GM12878 (cell line): ENCODE measurements at regions of chr10 and their contacts with region 1.

Region 1: DNA sequence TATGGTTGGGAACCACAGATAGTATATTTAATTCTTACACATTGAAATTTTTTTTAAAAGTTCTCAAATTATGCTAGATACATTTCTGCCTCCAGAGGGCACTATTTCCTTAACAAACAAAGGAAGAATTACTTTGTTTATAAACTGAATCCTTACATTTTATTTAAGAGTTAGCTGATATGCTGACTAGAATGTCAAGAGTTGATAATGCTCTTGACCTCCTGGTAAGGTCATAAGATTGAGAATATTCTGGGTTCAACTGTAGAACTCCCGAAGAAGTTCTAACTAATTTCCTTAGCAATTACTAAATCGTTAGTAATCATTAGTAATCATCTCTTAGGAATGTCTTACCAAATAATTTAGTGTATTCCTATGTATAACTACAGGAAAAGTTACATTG is 95.3 kb upstream of the CYP26C1 start:
- DNase-seq: no peak
- ATAC-seq: 0 out of 3 replicates have a peak, but pooled peaks have one; percentile 33
- H3K4me3 ChIP-seq: no peak overlapping the region
- H3K27ac ChIP-seq: no peak overlapping the region
- H3K4me1 ChIP-seq: no peaks in the 10 kb centered on the region
- H3K27me3 ChIP-seq: no peaks in the 10 kb centered on the region
- CTCF ChIP-seq: peak; percentile 32 to 59 (median 38); a peak in 5 of 6 replicates
- EP300 ChIP-seq: no peak
- POLR2A ChIP-seq: no peak
- RAD21 ChIP-seq: peak; percentile 36; the same call in 1 of the 2 replicates

Region 2: GRCh38 chr10:92886334-92886961 is 78.9 kb before region 1 on chr10:
- CTCF ChIA-PET with region 1: interaction called, 26 read pairs
- POLR2A ChIA-PET with region 1: no interaction called
- RAD21 ChIA-PET with region 1: interaction called, 4 read pairs
- SMC1A ChIA-PET with region 1: interaction called, 5 read pairs
- in situ Hi-C with region 1: no loop called
- intact Hi-C with region 1: loop called (anchors 1 kb)
- DNase-seq: no peak
- ATAC-seq: peak; percentile 68
- H3K4me3 ChIP-seq: no peak overlapping the region
- H3K27ac ChIP-seq: no peak overlapping the region
- H3K4me1 ChIP-seq: no peaks in the 10 kb centered on the region
- H3K27me3 ChIP-seq: no peaks in the 10 kb centered on the region
- CTCF ChIP-seq: no peak
- EP300 ChIP-seq: no peak
- POLR2A ChIP-seq: no peak
- RAD21 ChIP-seq: no peak

Region 3: DNA sequence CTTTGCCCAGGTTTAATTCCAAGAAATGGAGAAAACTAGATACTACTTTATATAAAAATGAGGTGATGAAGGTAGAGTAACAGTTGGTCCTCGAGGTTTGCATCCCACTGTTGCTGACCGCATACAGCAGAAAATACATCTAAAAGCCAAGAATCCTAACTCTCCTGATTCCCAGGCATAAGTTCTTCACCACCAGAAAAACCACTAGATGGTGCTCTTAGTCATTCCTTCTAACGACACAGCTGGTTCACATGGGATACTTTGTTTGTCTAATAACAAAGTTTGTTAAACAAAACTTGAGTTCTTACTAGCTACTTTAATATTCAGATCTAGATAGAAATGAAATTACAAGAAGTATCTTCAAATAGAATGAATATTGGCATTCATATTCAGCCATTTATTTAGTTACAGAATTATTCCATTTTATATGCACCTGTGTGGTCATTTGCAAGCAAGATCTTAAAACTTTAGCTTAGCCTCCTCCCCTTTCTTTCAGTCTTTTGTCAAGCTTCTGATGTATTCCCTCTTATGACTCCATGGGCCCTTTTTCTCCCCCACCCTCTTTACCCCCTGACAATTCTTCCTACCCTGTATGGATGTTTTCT is 41.2 kb after region 1 on chr10:
- CTCF ChIA-PET with region 1: interaction called, 10 read pairs
- POLR2A ChIA-PET with region 1: no interaction called
- RAD21 ChIA-PET with region 1: interaction called, 3 read pairs
- SMC1A ChIA-PET with region 1: interaction called, 4 read pairs
- in situ Hi-C with region 1: no loop called
- intact Hi-C with region 1: no loop called
- DNase-seq: no peak
- ATAC-seq: peak; percentile 49; the same call in 1 of the 3 replicates
- H3K4me3 ChIP-seq: no peak overlapping the region
- H3K27ac ChIP-seq: no peak overlapping the region
- H3K4me1 ChIP-seq: no peaks in the 10 kb centered on the region
- H3K27me3 ChIP-seq: no peaks in the 10 kb centered on the region
- CTCF ChIP-seq: peak; percentile 51 to 52 (median 52); a peak in 4 of 6 replicates
- EP300 ChIP-seq: no peak
- POLR2A ChIP-seq: no peak
- RAD21 ChIP-seq: peak; percentile 62

Region 4: GRCh38 chr10:93080350-93081046 is 115.2 kb after region 1 on chr10:
- CTCF ChIA-PET with region 1: interaction called, 7 read pairs
- POLR2A ChIA-PET with region 1: no interaction called
- RAD21 ChIA-PET with region 1: no interaction called
- SMC1A ChIA-PET with region 1: no interaction called
- in situ Hi-C with region 1: no loop called
- intact Hi-C with region 1: loop called (anchors 5 kb)
- DNase-seq: no peak
- ATAC-seq: peak; percentile 87
- H3K4me3 ChIP-seq: no peak overlapping the region
- H3K27ac ChIP-seq: no peak overlapping the region
- H3K4me1 ChIP-seq: peaks cover 5% of the 10 kb centered on the region
- H3K27me3 ChIP-seq: peaks cover 4 to 5% of the 10 kb centered on the region in 2 experiments; a peak in 2 of 4 replicates
- CTCF ChIP-seq: peak; percentile 76 to 85 (median 83)
- EP300 ChIP-seq: no peak
- POLR2A ChIP-seq: no peak
- RAD21 ChIP-seq: peak; percentile 90

Region 5: GRCh38 chr10:93352638-93353383 is 387.5 kb after region 1 on chr10:
- CTCF ChIA-PET with region 1: interaction called, 10 read pairs
- POLR2A ChIA-PET with region 1: no interaction called
- RAD21 ChIA-PET with region 1: interaction called, 3 read pairs
- SMC1A ChIA-PET with region 1: interaction called, 9 read pairs
- in situ Hi-C with region 1: no loop called
- intact Hi-C with region 1: loop called (anchors 5 kb)
- DNase-seq: no peak
- ATAC-seq: peak; percentile 45; the same call in 1 of the 3 replicates
- H3K4me3 ChIP-seq: no peak overlapping the region
- H3K27ac ChIP-seq: no peak overlapping the region
- H3K4me1 ChIP-seq: peaks cover 8% of the 10 kb centered on the region
- H3K27me3 ChIP-seq: peaks cover 1 to 4% of the 10 kb centered on the region in 2 experiments; a peak in 2 of 4 replicates
- CTCF ChIP-seq: peak; percentile 38 to 57 (median 46); a peak in 4 of 6 replicates
- EP300 ChIP-seq: no peak
- POLR2A ChIP-seq: no peak
- RAD21 ChIP-seq: peak; percentile 74

Region 6: GRCh38 chr10:93849593-93849992 is 884.3 kb after region 1 on chr10:
- CTCF ChIA-PET with region 1: no interaction called
- POLR2A ChIA-PET with region 1: no interaction called
- RAD21 ChIA-PET with region 1: no interaction called
- SMC1A ChIA-PET with region 1: no interaction called
- in situ Hi-C with region 1: no loop called
- intact Hi-C with region 1: no loop called
- DNase-seq: no peak
- ATAC-seq: no peak
- H3K4me3 ChIP-seq: no peak overlapping the region
- H3K27ac ChIP-seq: no peak overlapping the region
- H3K4me1 ChIP-seq: peaks cover 2% of the 10 kb centered on the region
- H3K27me3 ChIP-seq: no peaks in the 10 kb centered on the region; a peak in 1 of 4 replicates
- CTCF ChIP-seq: no peak
- EP300 ChIP-seq: no peak
- POLR2A ChIP-seq: no peak
- RAD21 ChIP-seq: no peak